ENCODE measurements at regions of chr22 and their contacts with region 1.

Region 1: DNA sequence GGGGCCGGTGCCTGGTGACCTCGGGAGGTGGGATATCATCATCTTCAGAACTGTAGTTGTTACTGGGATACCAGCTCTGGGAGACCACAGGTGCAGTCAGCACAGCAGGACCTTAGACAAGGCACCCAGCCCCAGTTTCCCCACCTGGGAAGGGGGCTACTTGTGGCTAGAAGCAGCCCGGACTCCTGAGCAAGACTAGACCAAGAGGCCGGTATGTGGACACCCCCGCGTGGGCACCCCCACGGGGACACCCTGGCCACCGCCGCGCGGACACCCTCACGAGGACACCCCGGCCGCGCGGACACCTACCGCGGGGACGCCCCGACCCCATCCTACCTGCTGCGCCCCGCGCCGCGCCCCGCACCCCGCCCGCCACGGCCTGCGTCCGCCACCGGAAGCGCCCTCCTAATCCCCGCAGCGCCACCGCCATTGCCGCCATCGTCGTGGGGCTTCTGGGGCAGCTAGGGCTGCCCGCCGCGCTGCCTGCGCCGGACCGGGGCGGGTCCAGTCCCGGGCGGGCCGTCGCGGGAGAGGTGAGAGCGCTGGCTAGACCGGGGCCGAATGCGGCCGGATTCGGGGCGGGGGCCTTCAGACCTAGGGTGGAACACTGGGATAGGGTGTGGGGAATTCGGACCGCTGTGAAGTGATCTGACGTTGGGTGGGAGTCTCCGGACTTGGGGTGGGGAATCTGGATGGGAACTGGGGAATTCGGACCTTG is at the starts of genes COMT and TXNRD2:
- DNase-seq: peak; percentile 81
- ATAC-seq: peak; percentile 94
- H3K4me3 Mint-ChIP-seq: peak within 1 kb of the TSS; percentile 95
- H3K27ac Mint-ChIP-seq: peak within 1 kb of the TSS; percentile 96
- H3K4me1 Mint-ChIP-seq: peaks cover 40% of the 10 kb centered on the region
- H3K27me3 Mint-ChIP-seq: no peaks in the 10 kb centered on the region
- total RNA-seq, gene COMT: 92.8 to 97.1 TPM
- total RNA-seq, gene TXNRD2: 16.1 to 19.3 TPM

Region 2: DNA sequence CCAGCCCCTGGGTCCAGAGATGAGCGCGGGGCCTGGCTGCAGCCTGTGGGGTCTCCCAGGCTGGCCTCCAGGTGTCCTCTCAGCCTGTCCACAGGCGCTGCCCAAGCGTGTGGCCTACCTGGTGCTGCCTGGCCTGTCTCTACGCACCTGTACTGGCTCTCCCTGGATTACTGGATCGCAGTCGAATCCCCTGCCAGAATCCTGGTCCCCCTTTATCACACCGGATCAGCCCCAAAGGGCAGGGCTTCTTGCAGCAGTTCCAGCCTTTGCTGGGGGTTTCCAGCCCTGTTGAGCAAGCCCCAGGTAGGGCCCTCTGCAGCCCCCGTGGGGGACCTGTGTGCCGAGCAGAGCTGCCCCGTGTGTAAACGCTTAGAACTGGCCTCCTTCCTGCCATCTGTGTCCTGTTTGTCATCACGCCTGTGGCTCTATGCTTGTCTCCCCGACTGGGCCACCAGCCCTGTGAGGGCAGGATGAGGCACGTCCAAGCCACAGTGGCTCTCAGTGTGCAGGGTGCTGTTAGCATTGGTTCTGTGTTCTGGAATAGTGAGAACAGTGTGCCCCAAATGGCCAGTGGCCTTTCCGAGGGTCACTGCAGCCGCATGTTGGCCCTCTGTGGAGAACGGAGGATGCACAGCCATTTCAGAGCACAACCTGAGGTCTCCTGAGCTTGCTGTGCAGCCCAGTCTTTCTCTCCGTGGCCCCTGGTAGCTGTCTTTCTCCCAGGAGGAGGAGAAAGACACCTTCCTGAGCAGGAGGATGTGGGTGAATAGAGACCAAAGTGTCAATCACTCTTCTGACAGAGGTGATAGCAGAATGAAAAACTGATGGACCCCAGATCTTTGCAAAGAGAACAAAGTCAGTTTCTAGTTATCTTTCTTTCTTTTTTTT is 14.0 kb after region 1 on chr22:
- CTCF ChIA-PET with region 1: interaction called, 25 read pairs
- POLR2A ChIA-PET with region 1: interaction called, 10 read pairs
- DNase-seq: peak; percentile 63
- ATAC-seq: peak; percentile 74
- H3K4me3 Mint-ChIP-seq: peak overlapping the region; percentile 63
- H3K27ac Mint-ChIP-seq: peak overlapping the region; percentile 98
- H3K4me1 Mint-ChIP-seq: peaks cover 35% of the 10 kb centered on the region
- H3K27me3 Mint-ChIP-seq: no peaks in the 10 kb centered on the region

Measured in activated CD8-positive, alpha-beta T cell treated with anti-CD3 and anti-CD28 coated beads, Interleukin-2, amount 10 ng/mL, durations not matched to agents 7 days and 5 days (primary cell).